ENCODE measurements at regions of chr17 and their contacts with region 1.

Region 1: DNA sequence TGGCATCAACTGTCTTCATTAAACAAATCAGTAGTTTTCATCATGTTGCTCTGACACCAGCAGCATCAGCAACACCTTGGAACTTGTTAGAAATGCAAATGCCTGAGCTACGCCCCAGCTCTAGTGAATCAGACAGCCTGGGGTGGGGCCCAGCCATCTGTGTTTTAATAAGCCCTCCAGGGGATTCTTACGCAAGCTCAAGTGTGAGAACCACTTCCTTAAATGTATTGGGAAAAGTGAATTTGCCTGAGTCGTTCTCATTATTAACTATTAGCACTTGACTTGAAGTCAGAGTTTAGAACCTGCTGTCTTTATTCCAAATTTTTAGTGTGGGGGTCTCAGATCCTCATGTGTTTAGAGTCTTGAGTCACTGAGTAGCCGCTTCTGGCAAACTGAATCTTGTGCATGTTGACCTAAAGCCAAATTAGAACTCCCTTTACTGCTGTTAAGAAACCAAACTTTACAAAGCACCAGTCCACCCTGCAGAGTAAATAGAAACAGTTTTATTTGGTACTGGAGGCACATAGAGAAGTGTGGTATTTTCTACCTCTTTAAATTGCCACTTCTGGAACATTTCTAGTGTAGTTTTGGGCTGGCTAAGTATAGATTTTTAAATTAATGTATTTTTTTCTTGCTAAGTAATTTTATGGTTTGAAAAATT is 137.4 kb upstream of the COX10 start:
- DNase-seq: peak; percentile 90
- ATAC-seq: peak; percentile 91
- H3K4me3 ChIP-seq: peak overlapping the region in 1 of 5 experiments; percentile 24
- H3K4me3 Mint-ChIP-seq: peak overlapping the region; percentile 75
- H3K27ac ChIP-seq: peak overlapping the region; percentile 91 to 98
- H3K27ac Mint-ChIP-seq: peak overlapping the region; percentile 96
- H3K4me1 ChIP-seq: peaks cover 37 to 44% of the 10 kb centered on the region in 2 donors
- H3K4me1 Mint-ChIP-seq: peaks cover 43% of the 10 kb centered on the region
- H3K27me3 ChIP-seq: no peaks in the 10 kb centered on the region
- H3K27me3 Mint-ChIP-seq: no peaks in the 10 kb centered on the region
- CTCF ChIP-seq: no peak

Region 2: DNA sequence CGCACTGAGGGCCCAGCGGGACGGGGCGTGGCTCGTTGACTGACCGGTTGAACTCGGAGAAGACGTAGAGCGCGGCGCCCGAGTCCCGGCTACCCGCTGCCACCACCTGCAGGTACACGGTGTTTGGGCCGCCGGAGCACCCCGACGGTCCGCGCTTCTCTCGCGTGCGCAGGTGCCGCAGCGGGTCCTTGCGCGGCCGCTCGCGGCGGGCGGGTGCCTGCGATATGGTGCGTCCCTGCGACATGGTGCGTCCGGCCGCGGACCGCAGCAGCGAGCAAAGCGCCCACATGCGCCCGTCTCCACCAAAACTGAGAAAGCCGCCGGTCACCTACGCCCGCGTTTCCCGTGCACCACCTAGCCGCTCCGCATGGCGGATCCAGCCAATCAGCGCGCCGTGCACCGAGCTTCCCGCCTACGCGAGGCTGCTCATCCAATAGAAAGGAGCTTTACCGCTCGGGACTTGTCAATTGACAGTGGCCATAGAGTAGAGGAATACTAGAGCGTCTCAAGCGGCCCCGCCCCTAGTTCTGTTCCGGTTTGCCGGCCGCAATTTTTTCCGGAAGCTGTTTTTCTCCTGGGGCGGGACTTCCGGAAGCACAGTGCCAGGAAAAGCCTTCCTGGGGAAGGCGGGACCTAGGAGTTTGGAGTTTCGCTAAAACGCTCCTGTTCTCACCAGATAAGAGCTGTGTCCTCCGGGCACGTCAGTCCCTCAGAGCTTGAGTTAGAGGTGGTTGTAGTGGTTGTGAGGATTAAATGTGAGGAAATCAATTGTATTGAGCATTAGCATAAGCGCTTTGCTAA is 914.1 kb before region 1 on chr17 and contains the start of gene ELAC2:
- CTCF ChIA-PET with region 1: no interaction called
- POLR2A ChIA-PET with region 1: no interaction called
- intact Hi-C with region 1: loop called (anchors 5 kb)
- DNase-seq: peak; percentile 97
- ATAC-seq: peak; percentile 99
- H3K4me3 ChIP-seq: peak within 1 kb of the TSS; percentile 62 to 98 (median 75)
- H3K4me3 Mint-ChIP-seq: peak within 1 kb of the TSS; percentile 97
- H3K27ac ChIP-seq: peak within 1 kb of the TSS; percentile 69 to 80
- H3K27ac Mint-ChIP-seq: peak within 1 kb of the TSS; percentile 91
- H3K4me1 ChIP-seq: peaks cover 12 to 13% of the 10 kb centered on the region in 2 donors
- H3K4me1 Mint-ChIP-seq: peaks cover 20% of the 10 kb centered on the region
- H3K27me3 ChIP-seq: no peaks in the 10 kb centered on the region
- H3K27me3 Mint-ChIP-seq: no peaks in the 10 kb centered on the region
- CTCF ChIP-seq: peak; percentile 20
- total RNA-seq, gene ELAC2: 79.0 and 79.4 TPM in 2 replicates

Region 3: DNA sequence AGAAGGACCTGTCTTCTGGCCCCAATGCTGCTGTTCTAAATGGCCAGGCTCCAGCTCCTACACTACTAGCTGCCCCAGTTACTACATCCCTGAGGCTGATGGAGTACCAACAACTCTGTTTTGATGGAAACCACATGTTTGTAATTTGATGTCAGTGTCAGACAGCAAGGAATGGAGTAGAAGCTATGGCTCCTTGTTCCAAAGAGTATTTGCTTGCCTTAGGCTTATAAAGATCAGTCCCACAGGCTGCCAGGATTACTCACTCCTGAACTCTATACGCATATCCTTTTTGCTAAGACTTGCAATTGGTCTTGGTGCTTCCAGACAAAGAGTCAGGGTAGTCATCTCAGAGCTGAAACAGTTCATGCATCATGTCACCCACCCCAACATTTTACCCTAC is 469.8 kb before region 1 on chr17:
- CTCF ChIA-PET with region 1: no interaction called
- POLR2A ChIA-PET with region 1: no interaction called
- intact Hi-C with region 1: no loop called
- DNase-seq: no peak
- ATAC-seq: no peak
- H3K4me3 ChIP-seq: no peak overlapping the region
- H3K4me3 Mint-ChIP-seq: no peak overlapping the region
- H3K27ac ChIP-seq: no peak overlapping the region
- H3K27ac Mint-ChIP-seq: no peak overlapping the region
- H3K4me1 ChIP-seq: no peaks in the 10 kb centered on the region
- H3K4me1 Mint-ChIP-seq: no peaks in the 10 kb centered on the region
- H3K27me3 ChIP-seq: no peaks in the 10 kb centered on the region
- H3K27me3 Mint-ChIP-seq: no peaks in the 10 kb centered on the region
- CTCF ChIP-seq: no peak

Region 4: GRCh38 chr17:13917634-13918033 is 14.3 kb before region 1 on chr17:
- CTCF ChIA-PET with region 1: interaction called, 7 read pairs
- POLR2A ChIA-PET with region 1: interaction called, 6 read pairs
- intact Hi-C with region 1: loop called (anchors 1 kb)
- DNase-seq: peak; percentile 61
- ATAC-seq: peak; percentile 76
- H3K4me3 ChIP-seq: peak overlapping the region in 1 of 5 experiments; percentile 32
- H3K4me3 Mint-ChIP-seq: peak overlapping the region; percentile 69
- H3K27ac ChIP-seq: peak overlapping the region; percentile 26 to 76
- H3K27ac Mint-ChIP-seq: peak overlapping the region; percentile 80
- H3K4me1 ChIP-seq: peaks cover 56 to 70% of the 10 kb centered on the region in 2 donors
- H3K4me1 Mint-ChIP-seq: peaks cover 72% of the 10 kb centered on the region
- H3K27me3 ChIP-seq: no peaks in the 10 kb centered on the region
- H3K27me3 Mint-ChIP-seq: no peaks in the 10 kb centered on the region
- CTCF ChIP-seq: no peak

Region 5: GRCh38 chr17:14069251-14070021 is 137.5 kb after region 1 on chr17 and contains the start of gene COX10:
- CTCF ChIA-PET with region 1: no interaction called
- POLR2A ChIA-PET with region 1: no interaction called
- intact Hi-C with region 1: loop called (anchors 2 kb)
- DNase-seq: peak; percentile 85
- ATAC-seq: peak; percentile 99
- H3K4me3 ChIP-seq: peak within 1 kb of the TSS; percentile 79 to 100 (median 97)
- H3K4me3 Mint-ChIP-seq: peak within 1 kb of the TSS; percentile 97
- H3K27ac ChIP-seq: peak within 1 kb of the TSS; percentile 65 to 73
- H3K27ac Mint-ChIP-seq: peak within 1 kb of the TSS; percentile 86
- H3K4me1 ChIP-seq: peaks cover 16 to 23% of the 10 kb centered on the region in 2 donors
- H3K4me1 Mint-ChIP-seq: peaks cover 35% of the 10 kb centered on the region
- H3K27me3 ChIP-seq: no peaks in the 10 kb centered on the region
- H3K27me3 Mint-ChIP-seq: no peaks in the 10 kb centered on the region
- CTCF ChIP-seq: no peak
- total RNA-seq, gene COX10: 19.2 and 21.8 TPM in 2 replicates

Region 6: GRCh38 chr17:14359163-14360020 is 427.5 kb after region 1 on chr17:
- CTCF ChIA-PET with region 1: no interaction called
- POLR2A ChIA-PET with region 1: no interaction called
- intact Hi-C with region 1: loop called (anchors 1 kb)
- DNase-seq: peak; percentile 90
- ATAC-seq: peak; percentile 99
- H3K4me3 ChIP-seq: no peak overlapping the region
- H3K4me3 Mint-ChIP-seq: peak overlapping the region; percentile 71
- H3K27ac ChIP-seq: no peak overlapping the region
- H3K27ac Mint-ChIP-seq: peak overlapping the region; percentile 66
- H3K4me1 ChIP-seq: peaks cover 28% of the 10 kb centered on the region in 2 donors
- H3K4me1 Mint-ChIP-seq: peaks cover 31% of the 10 kb centered on the region
- H3K27me3 ChIP-seq: peaks cover 0 to 30% (median 22%) of the 10 kb centered on the region in 4 experiments
- H3K27me3 Mint-ChIP-seq: peaks cover 10% of the 10 kb centered on the region
- CTCF ChIP-seq: peak; percentile 47

Region 7: GRCh38 chr17:14427900-14428647 is 496.1 kb after region 1 on chr17:
- CTCF ChIA-PET with region 1: no interaction called
- POLR2A ChIA-PET with region 1: no interaction called
- intact Hi-C with region 1: loop called (anchors 2 kb)
- DNase-seq: peak; percentile 77
- ATAC-seq: peak; percentile 87
- H3K4me3 ChIP-seq: peak overlapping the region; percentile 13 to 71 (median 38)
- H3K4me3 Mint-ChIP-seq: peak overlapping the region; percentile 83
- H3K27ac ChIP-seq: peak overlapping the region; percentile 58 to 79
- H3K27ac Mint-ChIP-seq: peak overlapping the region; percentile 93
- H3K4me1 ChIP-seq: peaks cover 44 to 45% of the 10 kb centered on the region in 2 donors
- H3K4me1 Mint-ChIP-seq: peaks cover 45% of the 10 kb centered on the region
- H3K27me3 ChIP-seq: no peaks in the 10 kb centered on the region
- H3K27me3 Mint-ChIP-seq: peaks cover 5% of the 10 kb centered on the region
- CTCF ChIP-seq: no peak

Measured in B cell (primary cell).